GM18951 (cell line): ENCODE measurements at regions of chr12 and their contacts with region 1.

Region 1: GRCh38 chr12:38138225-38139221 is 178.1 kb upstream of the ALG10B start:
- POLR2A ChIP-seq: no peak

Region 2: GRCh38 chr12:38316391-38317129 is 178.0 kb after region 1 on chr12 and contains the start of gene ALG10B:
- in situ Hi-C with region 1: loop called (anchors 10 kb)
- POLR2A ChIP-seq: peak; percentile 65

Region 3: DNA sequence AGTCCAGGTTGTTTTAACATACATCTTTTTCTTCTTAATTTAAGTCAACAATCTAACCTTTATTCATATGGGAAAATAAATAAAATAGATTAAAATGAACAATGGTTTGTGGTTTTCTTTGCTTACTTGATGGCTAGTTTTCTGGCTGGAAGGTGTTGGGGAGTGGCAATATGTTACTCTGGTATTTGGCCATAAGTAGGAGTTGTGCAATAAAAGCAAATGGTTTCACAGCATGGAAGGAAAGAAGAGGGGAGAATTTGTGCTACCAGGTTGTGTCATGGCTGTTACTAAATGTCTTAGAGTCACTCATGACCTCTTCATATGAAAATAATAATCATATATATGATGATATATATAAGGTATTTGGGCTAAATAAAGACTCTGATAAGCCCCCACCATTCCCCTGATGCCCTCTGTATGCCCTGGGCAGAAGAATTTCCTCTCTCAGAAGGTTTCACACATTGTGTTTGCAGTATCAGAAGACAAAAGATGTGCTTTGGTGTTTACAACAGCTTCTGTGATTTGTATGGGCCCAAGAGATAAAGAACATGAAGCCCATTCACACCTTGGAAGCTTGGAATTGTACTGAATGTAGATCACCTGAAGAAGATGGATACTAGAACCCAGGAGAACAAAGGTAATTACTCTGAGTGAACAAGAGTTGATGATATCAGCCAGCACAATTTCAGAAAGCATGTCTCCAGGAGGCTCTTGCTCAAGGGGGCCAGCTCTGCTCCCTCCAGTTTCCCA is 339.0 kb after region 1 on chr12:
- in situ Hi-C with region 1: no loop called
- POLR2A ChIP-seq: no peak

Region 4: GRCh38 chr12:39103552-39104165 is 965.1 kb after region 1 on chr12:
- in situ Hi-C with region 1: loop called (anchors 25 kb)
- POLR2A ChIP-seq: no peak

Region 5: DNA sequence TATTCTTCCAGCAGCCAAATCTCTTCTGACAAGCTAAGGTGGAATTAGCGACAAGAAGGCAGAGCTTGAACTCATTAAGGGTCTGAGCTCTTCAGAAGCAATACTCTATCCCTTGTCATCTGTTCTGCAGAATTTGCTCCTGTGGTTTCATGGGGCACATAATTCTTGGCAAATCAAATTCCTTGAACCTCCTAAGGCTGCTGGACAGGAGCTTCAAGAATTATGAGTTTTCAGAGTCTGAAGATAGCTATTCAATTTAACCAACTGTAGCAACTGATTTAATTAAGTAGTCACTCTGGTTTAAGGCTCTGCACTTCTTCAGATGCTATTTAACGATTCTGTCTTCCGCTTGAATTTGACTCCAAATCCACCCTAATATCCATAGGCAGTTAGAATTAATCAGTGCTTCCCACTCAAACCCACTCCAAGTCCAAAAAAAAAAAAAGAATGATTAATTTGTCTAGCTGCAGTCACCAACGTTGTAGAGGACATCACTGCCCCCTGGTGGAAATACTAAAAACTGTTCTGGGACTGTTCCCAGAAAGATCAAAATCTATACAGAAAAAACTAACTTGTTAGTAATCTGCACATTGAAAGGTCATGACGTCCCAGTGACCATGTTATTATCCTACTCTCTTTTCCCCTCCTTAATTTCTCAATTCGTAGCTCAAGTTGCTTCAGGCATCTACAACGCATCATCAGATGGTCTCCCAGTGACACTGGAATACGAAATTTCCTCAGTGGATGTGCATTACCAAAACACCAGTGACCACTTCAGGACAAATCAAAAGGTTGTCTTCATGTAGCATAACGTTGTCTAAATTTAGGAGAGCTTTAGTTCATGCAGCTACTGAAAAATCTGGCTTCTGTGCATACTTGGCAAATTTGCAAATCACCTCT is 1134.6 kb after region 1 on chr12:
- in situ Hi-C with region 1: loop called (anchors 25 kb)
- POLR2A ChIP-seq: no peak